ENCODE measurements at regions of chr7 and their contacts with region 1.

Region 1: GRCh38 chr7:103065667-103066066 is 8.9 kb downstream of the FBXL13 start:
- DNase-seq: peak; percentile 64
- ATAC-seq: peak; percentile 78
- H3K4me3 Mint-ChIP-seq: no peak overlapping the region
- H3K27ac Mint-ChIP-seq: no peak overlapping the region
- H3K4me1 Mint-ChIP-seq: no peaks in the 10 kb centered on the region
- H3K27me3 Mint-ChIP-seq: peaks cover 9% of the 10 kb centered on the region

Region 2: DNA sequence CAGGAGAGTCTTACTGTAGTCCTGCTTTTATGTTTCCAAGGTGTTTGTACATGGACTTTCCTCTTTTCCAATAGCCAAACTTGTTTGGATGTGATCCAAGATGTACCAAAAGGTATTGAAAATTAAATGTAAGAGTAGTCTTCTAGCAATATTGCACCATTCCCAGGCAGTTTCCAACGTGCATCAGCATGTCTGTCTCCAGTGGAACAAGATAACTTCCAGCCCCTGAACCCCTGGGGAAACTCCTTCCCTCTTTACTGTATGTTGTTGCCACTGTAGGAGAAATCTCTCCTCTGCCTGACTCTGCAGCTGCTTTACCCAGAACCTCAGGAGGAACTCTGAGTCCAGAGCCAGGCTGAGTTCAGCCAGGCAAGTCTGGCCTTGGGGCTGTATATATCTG is 27.8 kb after region 1 on chr7:
- CTCF ChIA-PET with region 1: interaction called, 11 read pairs
- DNase-seq: no peak
- ATAC-seq: no peak
- H3K4me3 Mint-ChIP-seq: no peak overlapping the region
- H3K27ac Mint-ChIP-seq: no peak overlapping the region
- H3K4me1 Mint-ChIP-seq: peaks cover 2% of the 10 kb centered on the region
- H3K27me3 Mint-ChIP-seq: no peaks in the 10 kb centered on the region